ENCODE measurements at regions of chr3 and their contacts with region 1.

Region 1: DNA sequence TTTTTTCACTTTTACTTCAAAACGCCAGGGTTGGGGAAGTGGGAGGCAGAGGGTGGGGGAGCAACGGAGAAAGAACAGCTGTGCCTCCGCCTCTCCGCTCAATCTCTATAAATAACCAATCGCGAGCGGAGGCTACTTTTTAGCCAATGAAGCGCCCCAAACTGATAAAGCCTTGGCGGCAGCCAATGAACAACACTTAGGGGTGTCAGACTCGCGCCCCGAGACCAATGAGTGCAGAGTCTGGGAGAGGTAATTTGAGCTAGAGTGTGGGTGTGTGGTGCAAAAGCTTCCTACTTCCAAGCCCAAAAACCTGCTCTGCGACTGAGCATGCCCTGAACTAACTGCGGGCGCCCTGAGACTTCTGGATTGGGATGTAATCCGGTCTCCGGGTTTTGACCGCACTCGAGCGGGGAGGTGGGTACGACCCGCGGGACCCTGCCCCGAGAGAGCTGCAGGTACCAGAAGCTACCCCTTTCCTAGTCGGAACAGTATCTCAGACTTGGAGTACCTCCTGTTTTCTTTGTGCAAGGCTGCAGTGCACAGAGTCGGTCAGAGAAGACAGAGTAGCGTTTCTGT is 800 bp upstream of the RAP2B start:
- DNase-seq: peak; percentile 95
- H3K4me3 Mint-ChIP-seq: peak overlapping the region; percentile 93
- H3K27ac Mint-ChIP-seq: peak overlapping the region; percentile 98
- H3K4me1 Mint-ChIP-seq: peaks cover 26% of the 10 kb centered on the region
- H3K27me3 Mint-ChIP-seq: no peaks in the 10 kb centered on the region

Region 2: DNA sequence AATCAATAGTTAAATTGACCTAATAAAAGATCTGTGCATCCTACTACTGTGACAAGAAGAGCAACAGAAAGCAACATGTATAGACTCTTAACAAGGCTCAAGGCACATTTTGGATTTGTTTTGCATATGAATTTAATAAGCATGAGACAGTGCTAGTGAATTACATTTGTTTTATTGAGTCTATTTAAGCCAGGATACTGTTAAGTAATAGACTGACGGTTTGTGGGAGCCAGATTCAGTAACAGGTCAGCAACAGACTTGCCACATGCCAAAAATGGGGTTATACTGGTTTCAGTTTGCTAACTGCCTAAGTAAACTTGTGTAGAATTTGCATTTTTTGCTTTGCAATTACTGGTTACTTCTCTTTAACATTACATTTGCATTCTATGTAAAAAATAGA is 838.5 kb before region 1 on chr3:
- CTCF ChIA-PET with region 1: no interaction called
- POLR2A ChIA-PET with region 1: no interaction called
- intact Hi-C with region 1: loop called (anchors 10 kb)
- DNase-seq: no peak
- H3K4me3 Mint-ChIP-seq: no peak overlapping the region
- H3K27ac Mint-ChIP-seq: peak overlapping the region; percentile 24
- H3K4me1 Mint-ChIP-seq: peaks cover 82% of the 10 kb centered on the region
- H3K27me3 Mint-ChIP-seq: no peaks in the 10 kb centered on the region

Region 3: GRCh38 chr3:153097213-153097612 is 64.0 kb before region 1 on chr3:
- CTCF ChIA-PET with region 1: no interaction called
- POLR2A ChIA-PET with region 1: no interaction called
- intact Hi-C with region 1: no loop called
- DNase-seq: no peak
- H3K4me3 Mint-ChIP-seq: no peak overlapping the region
- H3K27ac Mint-ChIP-seq: no peak overlapping the region
- H3K4me1 Mint-ChIP-seq: peaks cover 2% of the 10 kb centered on the region
- H3K27me3 Mint-ChIP-seq: no peaks in the 10 kb centered on the region

Region 4: DNA sequence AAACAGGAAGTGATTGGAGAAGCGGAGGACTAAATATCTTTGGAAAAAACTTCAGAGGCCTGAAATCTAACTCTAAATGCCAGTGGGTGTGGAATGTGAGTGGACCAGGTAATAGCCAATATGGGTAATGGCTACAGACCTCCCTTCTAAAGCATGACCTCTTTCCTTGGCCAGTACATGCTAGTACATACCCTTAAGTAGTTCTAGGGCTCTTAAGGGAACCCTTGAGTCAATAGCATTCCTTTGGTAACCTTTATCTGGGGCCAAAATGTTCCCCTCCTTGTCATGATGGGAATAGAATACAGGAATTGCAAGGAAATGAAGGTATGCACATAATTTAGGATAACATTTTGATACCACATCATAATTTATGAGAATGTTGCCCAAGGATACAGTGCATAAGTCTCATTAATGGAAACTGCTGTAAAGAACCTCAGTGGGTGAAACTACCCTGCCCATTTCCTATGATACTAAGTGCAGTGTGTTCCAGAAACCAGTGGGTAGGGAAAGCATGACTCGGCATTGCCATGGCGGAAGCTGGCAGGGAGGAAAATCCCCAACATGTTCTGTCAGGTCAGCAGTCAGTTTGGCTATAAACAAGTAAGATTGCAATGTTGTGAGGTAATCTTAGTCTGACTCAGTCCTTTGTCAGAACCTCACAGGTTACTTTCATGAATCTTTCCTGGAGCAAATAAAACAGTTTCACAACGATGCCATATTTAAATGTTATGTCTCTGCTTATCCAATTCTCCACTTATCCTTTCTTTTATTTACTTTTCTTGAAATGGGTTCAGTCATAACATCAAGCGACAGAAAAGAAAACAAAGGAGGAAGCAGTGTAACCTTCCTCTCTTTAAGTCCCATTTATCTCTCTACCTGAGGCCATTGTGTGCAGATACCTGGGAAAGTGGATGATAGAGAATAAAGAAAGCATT is 22.7 kb before region 1 on chr3:
- CTCF ChIA-PET with region 1: no interaction called
- POLR2A ChIA-PET with region 1: interaction called, 9 read pairs
- intact Hi-C with region 1: loop called (anchors 1 kb)
- DNase-seq: peak; percentile 91
- H3K4me3 Mint-ChIP-seq: no peak overlapping the region
- H3K27ac Mint-ChIP-seq: peak overlapping the region; percentile 73
- H3K4me1 Mint-ChIP-seq: peaks cover 35% of the 10 kb centered on the region
- H3K27me3 Mint-ChIP-seq: peaks cover 5% of the 10 kb centered on the region

Region 5: GRCh38 chr3:153443961-153444360 is 282.7 kb after region 1 on chr3:
- CTCF ChIA-PET with region 1: no interaction called
- POLR2A ChIA-PET with region 1: no interaction called
- intact Hi-C with region 1: loop called (anchors 10 kb)
- DNase-seq: no peak
- H3K4me3 Mint-ChIP-seq: no peak overlapping the region
- H3K27ac Mint-ChIP-seq: no peak overlapping the region
- H3K4me1 Mint-ChIP-seq: peaks cover 18% of the 10 kb centered on the region
- H3K27me3 Mint-ChIP-seq: peaks cover 1% of the 10 kb centered on the region

Region 6: GRCh38 chr3:153768561-153769469 is 607.6 kb after region 1 on chr3:
- CTCF ChIA-PET with region 1: interaction called, 6 read pairs
- POLR2A ChIA-PET with region 1: no interaction called
- intact Hi-C with region 1: loop called (anchors 1 kb)
- DNase-seq: peak; percentile 57
- H3K4me3 Mint-ChIP-seq: no peak overlapping the region
- H3K27ac Mint-ChIP-seq: no peak overlapping the region
- H3K4me1 Mint-ChIP-seq: peaks cover 2% of the 10 kb centered on the region
- H3K27me3 Mint-ChIP-seq: peaks cover 2% of the 10 kb centered on the region

Region 7: DNA sequence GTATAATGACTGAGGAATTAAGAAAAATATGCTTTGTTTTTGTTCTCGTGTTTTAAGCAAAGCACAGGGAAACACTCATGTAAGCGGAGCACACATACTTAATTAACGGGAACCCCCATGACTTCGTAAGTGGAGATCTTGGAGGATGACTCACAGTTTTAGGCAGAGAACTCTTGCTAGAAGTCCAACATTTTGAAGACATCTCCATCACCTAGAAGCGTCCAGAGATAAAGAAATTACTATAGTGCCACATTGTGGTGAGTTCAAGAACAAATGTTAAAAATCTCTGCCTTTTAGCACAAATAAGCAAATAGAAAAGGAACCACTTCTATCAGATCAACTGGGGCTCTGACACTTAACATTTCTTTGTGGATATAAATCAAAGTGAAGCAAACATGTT is 765.9 kb after region 1 on chr3:
- CTCF ChIA-PET with region 1: no interaction called
- POLR2A ChIA-PET with region 1: no interaction called
- intact Hi-C with region 1: no loop called
- DNase-seq: no peak
- H3K4me3 Mint-ChIP-seq: no peak overlapping the region
- H3K27ac Mint-ChIP-seq: no peak overlapping the region
- H3K4me1 Mint-ChIP-seq: no peaks in the 10 kb centered on the region
- H3K27me3 Mint-ChIP-seq: peaks cover 8% of the 10 kb centered on the region